ENCODE measurements at regions of chr1 and their contacts with region 1.

Region 1: GRCh38 chr1:3611170-3612019 is at the start of gene MEGF6:
- DNase-seq: peak in 8 of 9 experiments; percentile 45 to 78 (median 60)
- ATAC-seq: peak; percentile 85
- H3K4me3 ChIP-seq: peak within 1 kb of the TSS in 1 of 2 experiments; percentile 35
- H3K4me3 Mint-ChIP-seq: peak within 1 kb of the TSS; percentile 78
- H3K27ac ChIP-seq: no peak within 1 kb of the TSS
- H3K27ac Mint-ChIP-seq: no peak within 1 kb of the TSS
- H3K4me1 ChIP-seq: peaks cover 14% of the 10 kb centered on the region
- H3K4me1 Mint-ChIP-seq: peaks cover 7% of the 10 kb centered on the region
- H3K27me3 ChIP-seq: peaks cover 2 to 16% of the 10 kb centered on the region in 2 experiments
- H3K27me3 Mint-ChIP-seq: peaks cover 11% of the 10 kb centered on the region
- CTCF ChIP-seq: no peak
- total RNA-seq, gene MEGF6: 33.9 to 42.8 TPM

Region 2: GRCh38 chr1:3491291-3492246 is 119.8 kb before region 1 on chr1:
- CTCF ChIA-PET with region 1: interaction called, 12 read pairs
- POLR2A ChIA-PET with region 1: no interaction called
- intact Hi-C with region 1: no loop called
- DNase-seq: peak; percentile 80 to 92 (median 86)
- ATAC-seq: peak; percentile 100
- H3K4me3 ChIP-seq: no peak overlapping the region
- H3K4me3 Mint-ChIP-seq: peak overlapping the region; percentile 45
- H3K27ac ChIP-seq: no peak overlapping the region
- H3K27ac Mint-ChIP-seq: no peak overlapping the region
- H3K4me1 ChIP-seq: no peaks in the 10 kb centered on the region
- H3K4me1 Mint-ChIP-seq: peaks cover 5% of the 10 kb centered on the region
- H3K27me3 ChIP-seq: no peaks in the 10 kb centered on the region
- H3K27me3 Mint-ChIP-seq: no peaks in the 10 kb centered on the region
- CTCF ChIP-seq: peak; percentile 99

Region 3: DNA sequence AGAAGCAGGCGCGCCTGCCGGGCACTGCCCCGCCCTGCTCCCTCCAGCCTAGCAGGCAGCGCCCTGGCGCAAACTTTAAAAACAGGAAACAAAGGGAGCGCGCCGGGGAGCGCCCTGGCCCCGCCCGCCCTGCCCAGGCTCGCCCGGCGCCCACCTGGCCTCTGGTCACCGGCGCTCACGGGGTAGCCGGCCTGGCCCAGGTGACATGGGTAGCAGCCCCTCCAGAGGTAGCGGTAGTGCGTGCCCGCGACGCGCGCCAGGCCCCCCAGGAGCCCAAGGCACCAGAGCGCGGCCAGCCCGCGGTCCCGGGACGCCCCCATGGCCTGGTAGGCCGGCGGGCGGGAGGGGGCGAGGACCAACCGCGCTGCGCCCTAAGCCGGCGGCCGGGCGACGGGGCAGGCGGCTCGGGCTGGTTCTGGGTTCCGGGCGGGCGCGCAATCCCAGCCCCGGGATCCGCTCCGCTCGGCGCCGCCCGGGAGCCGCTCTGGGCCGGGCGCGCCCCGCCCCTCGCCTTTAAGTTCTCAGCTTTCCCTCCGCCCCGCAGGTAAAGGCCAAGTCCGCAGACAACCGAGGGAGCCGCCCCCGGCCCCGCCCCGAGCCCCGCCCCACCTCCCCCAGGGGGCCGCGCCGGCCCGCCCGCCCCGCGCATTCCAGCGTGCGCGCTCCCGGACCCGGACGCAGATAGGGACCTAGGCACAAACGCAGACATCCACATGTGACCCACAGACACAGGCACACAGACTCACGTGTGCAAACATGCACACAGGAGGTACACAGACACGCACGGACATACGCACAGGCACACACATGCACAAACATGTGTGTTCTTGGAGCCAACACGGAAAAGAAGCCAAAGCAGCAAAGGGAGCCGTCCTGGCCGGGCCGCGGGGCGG is 80.2 kb before region 1 on chr1:
- CTCF ChIA-PET with region 1: interaction called, 4 read pairs
- POLR2A ChIA-PET with region 1: interaction called, 3 read pairs
- intact Hi-C with region 1: loop called in 1 of 2 experiments (anchors 2 kb)
- DNase-seq: peak; percentile 60 to 93 (median 79)
- ATAC-seq: peak; percentile 84
- H3K4me3 ChIP-seq: peak overlapping the region; percentile 62 to 82
- H3K4me3 Mint-ChIP-seq: peak overlapping the region; percentile 84
- H3K27ac ChIP-seq: peak overlapping the region in 1 of 2 experiments; percentile 61
- H3K27ac Mint-ChIP-seq: peak overlapping the region; percentile 87
- H3K4me1 ChIP-seq: peaks cover 10% of the 10 kb centered on the region
- H3K4me1 Mint-ChIP-seq: peaks cover 15% of the 10 kb centered on the region
- H3K27me3 ChIP-seq: no peaks in the 10 kb centered on the region
- H3K27me3 Mint-ChIP-seq: no peaks in the 10 kb centered on the region
- CTCF ChIP-seq: no peak

Region 4: GRCh38 chr1:3564921-3565827 is 46.2 kb before region 1 on chr1:
- CTCF ChIA-PET with region 1: interaction called, 31 read pairs
- POLR2A ChIA-PET with region 1: no interaction called
- intact Hi-C with region 1: loop called in 1 of 2 experiments (anchors 1 kb)
- DNase-seq: peak in 8 of 9 experiments; percentile 11 to 68 (median 38)
- ATAC-seq: peak; percentile 71
- H3K4me3 ChIP-seq: no peak overlapping the region
- H3K4me3 Mint-ChIP-seq: no peak overlapping the region
- H3K27ac ChIP-seq: no peak overlapping the region
- H3K27ac Mint-ChIP-seq: no peak overlapping the region
- H3K4me1 ChIP-seq: no peaks in the 10 kb centered on the region
- H3K4me1 Mint-ChIP-seq: no peaks in the 10 kb centered on the region
- H3K27me3 ChIP-seq: no peaks in the 10 kb centered on the region
- H3K27me3 Mint-ChIP-seq: no peaks in the 10 kb centered on the region
- CTCF ChIP-seq: peak; percentile 82